ENCODE measurements at regions of chr5 and their contacts with region 1.

Region 1: GRCh38 chr5:133423618-133424282 is 188.6 kb downstream of the FSTL4 start:
- DNase-seq: peak; percentile 53 to 75
- ATAC-seq: peak; percentile 90 to 96
- H3K4me3 ChIP-seq: no peak overlapping the region
- H3K27ac ChIP-seq: 0 out of 6 replicates have a peak overlapping the region, but pooled peaks of 1 of the 2 experiments have one; percentile 19
- H3K4me1 ChIP-seq: peaks cover 5% of the 10 kb centered on the region; the same call in 1 of the 3 replicates
- CTCF ChIP-seq: peak; percentile 92
- EP300 ChIP-seq: no peak
- POLR2A ChIP-seq: no peak
- RAD21 ChIP-seq: peak; percentile 78 to 87

Region 2: GRCh38 chr5:133393776-133394476 is 29.8 kb before region 1 on chr5:
- CTCF ChIA-PET with region 1: interaction called, 12 read pairs
- POLR2A ChIA-PET with region 1: no interaction called
- DNase-seq: no peak
- ATAC-seq: no peak
- H3K4me3 ChIP-seq: no peak overlapping the region
- H3K27ac ChIP-seq: no peak overlapping the region
- H3K4me1 ChIP-seq: no peaks in the 10 kb centered on the region
- CTCF ChIP-seq: no peak
- EP300 ChIP-seq: no peak
- POLR2A ChIP-seq: no peak
- RAD21 ChIP-seq: no peak

Region 3: GRCh38 chr5:133460172-133460758 is 36.5 kb after region 1 on chr5:
- CTCF ChIA-PET with region 1: interaction called, 13 read pairs
- POLR2A ChIA-PET with region 1: no interaction called
- DNase-seq: peak; percentile 29 to 66
- ATAC-seq: peak in 1 of 2 experiments; percentile 80; a peak in 3 of 6 replicates
- H3K4me3 ChIP-seq: no peak overlapping the region
- H3K27ac ChIP-seq: no peak overlapping the region
- H3K4me1 ChIP-seq: peaks cover 10% of the 10 kb centered on the region; the same call in 2 of the 3 replicates
- CTCF ChIP-seq: peak; percentile 54
- EP300 ChIP-seq: no peak
- POLR2A ChIP-seq: no peak
- RAD21 ChIP-seq: peak; percentile 48 to 69; a peak in 4 of 5 replicates

Region 4: DNA sequence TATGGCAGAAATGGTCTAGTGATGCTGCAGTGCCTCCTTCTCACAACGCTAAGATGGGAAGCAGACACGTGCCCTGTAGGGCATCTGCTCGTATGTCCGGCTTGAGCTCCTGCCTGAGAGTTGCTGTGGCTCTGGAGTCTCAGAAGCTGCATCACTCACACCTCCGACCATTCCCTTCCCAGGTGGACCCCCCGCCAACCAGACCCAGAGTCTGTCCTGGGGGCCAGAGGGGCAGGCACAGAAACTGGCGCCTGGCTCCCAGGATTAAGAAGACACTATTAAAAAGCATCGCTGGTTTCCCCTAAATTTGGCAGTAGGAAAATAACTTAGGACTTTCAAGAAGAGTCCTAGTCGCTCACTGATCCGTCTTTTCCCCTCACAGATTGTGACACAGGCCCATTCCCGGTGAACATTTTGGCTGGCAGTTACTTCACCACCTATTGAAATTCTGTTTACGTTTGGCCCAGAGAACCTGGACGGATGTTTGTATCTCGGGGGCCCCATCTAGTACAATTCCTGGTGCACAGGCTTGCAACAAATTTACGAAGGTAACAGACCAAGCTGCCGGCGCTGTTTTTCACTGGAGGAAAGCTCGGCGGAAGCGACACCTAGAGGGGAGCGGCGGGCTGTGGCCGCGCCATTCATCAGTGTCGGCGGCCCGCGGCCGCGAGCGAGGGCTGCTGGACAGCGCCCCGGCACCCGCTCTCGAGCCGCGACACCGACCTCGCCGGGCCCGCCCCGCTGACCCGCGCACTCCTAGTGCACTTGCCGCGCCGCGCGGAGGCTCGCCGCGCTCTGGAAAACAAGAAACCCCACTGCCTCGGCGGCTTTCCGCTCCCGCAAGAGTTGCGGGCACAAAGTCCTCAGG is 187.0 kb after region 1 on chr5:
- CTCF ChIA-PET with region 1: interaction called, 21 read pairs
- POLR2A ChIA-PET with region 1: no interaction called
- DNase-seq: peak; percentile 61 to 82
- ATAC-seq: peak; percentile 89 to 96
- H3K4me3 ChIP-seq: peak overlapping the region; percentile 65
- H3K27ac ChIP-seq: no peak overlapping the region
- H3K4me1 ChIP-seq: peaks cover 11% of the 10 kb centered on the region
- CTCF ChIP-seq: peak; percentile 66
- EP300 ChIP-seq: no peak
- POLR2A ChIP-seq: no peak
- RAD21 ChIP-seq: peak; percentile 58 to 64

Region 5: DNA sequence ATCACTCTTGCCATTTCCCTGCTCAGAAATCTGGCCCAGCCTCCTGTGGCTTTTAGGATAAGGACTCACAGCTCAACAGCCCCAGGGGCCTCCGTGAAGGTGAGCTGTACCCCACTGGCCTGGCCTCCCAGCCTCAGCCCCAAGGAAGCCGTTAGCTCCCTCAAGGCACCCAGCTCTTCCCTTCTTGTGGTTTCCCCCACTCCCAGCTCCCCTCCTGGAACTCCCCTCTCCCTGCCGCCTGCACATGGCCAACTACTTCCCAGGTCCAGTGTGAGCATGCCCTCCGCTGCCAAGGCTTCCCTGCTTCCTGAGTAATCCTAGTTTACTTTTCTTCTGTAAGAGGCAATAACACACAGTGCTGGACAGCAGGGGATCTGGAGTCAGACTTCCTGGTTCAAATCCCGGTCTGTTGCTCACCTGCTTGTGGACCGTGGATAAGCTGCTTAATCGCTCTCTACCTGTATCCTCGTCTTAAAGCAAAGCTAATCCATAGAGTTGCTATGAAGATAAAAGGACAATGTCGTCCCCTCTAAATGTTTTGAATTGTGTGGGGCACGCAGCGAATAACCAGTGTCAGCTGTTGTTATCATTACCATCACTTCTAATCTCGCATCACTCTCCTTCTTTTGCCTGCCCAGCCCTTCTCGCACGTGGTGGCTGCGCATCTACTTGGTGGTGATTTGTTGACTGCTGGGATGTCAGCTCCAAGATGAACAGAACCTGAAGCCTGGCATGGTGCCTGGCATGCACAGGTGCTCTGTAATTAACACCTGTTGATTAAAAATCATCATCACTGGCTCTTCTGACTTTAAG is 458.0 kb after region 1 on chr5:
- CTCF ChIA-PET with region 1: interaction called, 12 read pairs
- POLR2A ChIA-PET with region 1: no interaction called
- DNase-seq: no peak
- ATAC-seq: no peak
- H3K4me3 ChIP-seq: no peak overlapping the region
- H3K27ac ChIP-seq: no peak overlapping the region
- H3K4me1 ChIP-seq: no peaks in the 10 kb centered on the region
- CTCF ChIP-seq: no peak
- EP300 ChIP-seq: no peak
- POLR2A ChIP-seq: no peak
- RAD21 ChIP-seq: no peak